RWPE1 (cell line): ENCODE measurements at regions of chr11 and their contacts with region 1.

Region 1: DNA sequence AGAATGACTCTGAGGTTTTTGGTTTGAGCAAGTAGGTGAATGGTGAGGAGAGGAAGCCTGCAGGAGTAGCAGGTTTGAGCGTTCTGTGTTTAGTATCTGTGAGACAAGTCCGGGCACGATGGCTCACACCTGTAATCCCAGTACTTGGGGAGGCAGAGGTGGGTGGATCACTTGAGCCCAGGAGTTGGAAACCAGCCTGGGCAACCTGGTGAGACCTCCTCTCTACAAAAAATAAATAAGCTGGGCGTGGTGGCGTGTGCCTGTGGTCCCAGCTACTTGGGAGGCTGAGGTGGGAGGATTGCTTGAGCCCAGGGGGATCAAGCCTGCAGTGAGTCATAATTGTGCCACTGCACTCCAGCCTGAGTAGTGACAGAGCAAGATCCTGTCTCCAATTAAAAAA is 9.7 kb upstream of the CENATAC start:
- DNase-seq: peak; percentile 65
- H3K27ac ChIP-seq: peak overlapping the region; percentile 80
- CTCF ChIP-seq: no peak

Region 2: GRCh38 chr11:119196833-119197483 is 208.7 kb after region 1 on chr11:
- CTCF ChIA-PET with region 1: interaction called, 10 read pairs
- POLR2A ChIA-PET with region 1: no interaction called
- DNase-seq: peak; percentile 86
- H3K27ac ChIP-seq: no peak overlapping the region
- CTCF ChIP-seq: peak; percentile 86